Activated T-helper 1 cell treated with anti-CD3 and anti-CD28 coated beads, Interleukin-12 subunit alpha, Interleukin-12 subunit beta, Interleukin-2, Interleukin-4 antibody, amounts not matched to agents 30 ng/mL and 10 ng/mL and 1 ng/mL, durations not matched to agents 14 hours and 24 hours and 36 hours (primary cell): ENCODE measurements at regions of chr9 and their contacts with region 1.

Region 1: DNA sequence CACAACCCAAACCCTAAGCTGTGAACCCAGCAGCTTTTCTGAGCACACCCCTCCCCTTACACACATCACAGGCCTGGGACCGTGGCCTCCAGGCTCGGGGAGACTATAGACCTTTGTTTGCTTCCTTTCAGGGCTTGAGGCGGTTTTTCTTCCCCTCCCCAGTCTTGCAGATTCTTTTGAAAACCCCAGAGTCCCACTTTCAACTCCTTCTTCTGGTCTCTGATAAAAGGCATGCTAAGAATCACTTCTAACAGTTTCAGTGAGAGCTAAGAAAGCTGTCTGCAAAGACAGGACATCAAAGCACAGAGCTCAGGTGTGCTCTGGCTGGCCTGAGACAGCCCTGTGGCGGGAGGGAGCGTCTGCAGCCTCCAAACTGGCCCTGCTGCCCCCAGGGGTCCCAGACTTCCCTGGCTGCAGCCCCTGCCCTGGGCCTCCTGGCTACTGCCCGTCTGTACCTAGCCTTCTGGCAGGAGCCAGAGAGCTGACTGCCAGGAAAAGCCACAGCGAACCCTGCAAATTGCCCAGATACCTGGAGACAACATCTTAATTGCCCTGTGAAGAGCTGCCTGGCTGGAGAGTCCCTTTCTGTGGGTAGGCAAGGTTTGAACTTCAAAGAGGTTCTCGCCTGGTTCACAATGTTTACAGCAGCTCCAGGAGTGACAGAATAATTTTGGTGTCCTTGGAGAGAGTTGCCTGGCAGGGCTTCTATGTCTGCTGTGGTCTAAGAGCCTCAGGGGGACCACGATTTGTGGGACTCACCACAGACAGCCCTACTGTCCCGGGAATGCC is 139.0 kb downstream of the GADD45G start:
- DNase-seq: peak; percentile 75
- H3K4me3 Mint-ChIP-seq: peak overlapping the region; percentile 25
- H3K27ac Mint-ChIP-seq: peak overlapping the region; percentile 82
- H3K4me1 Mint-ChIP-seq: peaks cover 90% of the 10 kb centered on the region
- H3K27me3 Mint-ChIP-seq: no peaks in the 10 kb centered on the region

Region 2: GRCh38 chr9:89340332-89340731 is 403.4 kb before region 1 on chr9:
- intact Hi-C with region 1: loop called (anchors 10 kb)
- DNase-seq: no peak
- H3K4me3 Mint-ChIP-seq: no peak overlapping the region
- H3K27ac Mint-ChIP-seq: peak overlapping the region; percentile 60
- H3K4me1 Mint-ChIP-seq: peaks cover 35% of the 10 kb centered on the region
- H3K27me3 Mint-ChIP-seq: no peaks in the 10 kb centered on the region

Region 3: DNA sequence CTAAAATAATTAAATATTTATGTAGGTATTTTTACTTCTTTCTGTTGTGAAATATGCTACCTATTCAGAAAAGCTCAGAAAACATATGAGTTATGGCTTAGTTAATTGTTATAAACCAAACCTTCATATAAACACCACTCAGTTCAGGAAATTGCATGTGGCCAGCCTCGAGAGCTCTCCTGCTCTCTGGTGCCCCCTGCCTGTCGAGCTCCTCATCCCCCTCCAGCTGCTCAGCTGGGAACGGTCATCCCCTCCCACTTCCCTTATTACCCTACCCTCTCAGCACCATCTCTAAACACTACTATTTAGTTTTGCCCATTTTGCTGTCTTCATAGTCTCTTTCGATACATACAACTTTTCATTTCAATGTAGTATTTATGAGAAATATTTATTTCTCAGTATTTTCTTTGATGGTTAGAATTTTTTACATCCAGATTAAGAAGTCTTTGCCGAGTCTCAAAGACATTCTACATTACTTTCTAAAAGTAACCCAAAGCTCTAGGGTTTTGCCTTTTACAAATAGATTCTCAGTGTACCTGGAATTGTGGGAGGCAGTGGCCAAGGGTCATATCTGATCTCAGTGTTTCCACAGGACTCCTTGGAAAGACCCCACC is 194.6 kb before region 1 on chr9:
- intact Hi-C with region 1: no loop called
- DNase-seq: peak; percentile 73
- H3K4me3 Mint-ChIP-seq: no peak overlapping the region
- H3K27ac Mint-ChIP-seq: peak overlapping the region; percentile 29
- H3K4me1 Mint-ChIP-seq: peaks cover 30% of the 10 kb centered on the region
- H3K27me3 Mint-ChIP-seq: peaks cover 15% of the 10 kb centered on the region

Region 4: DNA sequence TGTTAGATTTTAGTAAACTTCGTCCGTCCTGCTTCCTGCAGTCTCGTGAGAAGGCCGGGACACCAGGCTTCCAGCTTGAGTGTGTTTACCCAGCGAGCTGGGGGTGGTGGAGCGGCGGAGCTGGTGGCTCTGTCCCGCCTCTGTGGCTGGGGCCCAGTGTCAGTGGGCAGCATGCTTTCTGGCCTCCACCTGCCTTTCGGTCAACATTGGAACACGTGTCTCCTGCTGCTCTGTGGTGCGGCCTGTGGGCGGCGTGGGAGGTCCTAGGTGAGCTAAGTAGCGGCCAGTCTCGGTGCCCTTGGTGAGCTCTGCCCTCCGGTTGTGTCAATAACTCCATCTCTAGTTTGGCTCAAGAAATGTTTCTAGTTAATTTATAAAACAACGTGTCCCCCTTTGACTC is 13.1 kb before region 1 on chr9:
- intact Hi-C with region 1: loop called (anchors 1 kb)
- DNase-seq: no peak
- H3K4me3 Mint-ChIP-seq: no peak overlapping the region
- H3K27ac Mint-ChIP-seq: no peak overlapping the region
- H3K4me1 Mint-ChIP-seq: peaks cover 20% of the 10 kb centered on the region
- H3K27me3 Mint-ChIP-seq: no peaks in the 10 kb centered on the region

Region 5: DNA sequence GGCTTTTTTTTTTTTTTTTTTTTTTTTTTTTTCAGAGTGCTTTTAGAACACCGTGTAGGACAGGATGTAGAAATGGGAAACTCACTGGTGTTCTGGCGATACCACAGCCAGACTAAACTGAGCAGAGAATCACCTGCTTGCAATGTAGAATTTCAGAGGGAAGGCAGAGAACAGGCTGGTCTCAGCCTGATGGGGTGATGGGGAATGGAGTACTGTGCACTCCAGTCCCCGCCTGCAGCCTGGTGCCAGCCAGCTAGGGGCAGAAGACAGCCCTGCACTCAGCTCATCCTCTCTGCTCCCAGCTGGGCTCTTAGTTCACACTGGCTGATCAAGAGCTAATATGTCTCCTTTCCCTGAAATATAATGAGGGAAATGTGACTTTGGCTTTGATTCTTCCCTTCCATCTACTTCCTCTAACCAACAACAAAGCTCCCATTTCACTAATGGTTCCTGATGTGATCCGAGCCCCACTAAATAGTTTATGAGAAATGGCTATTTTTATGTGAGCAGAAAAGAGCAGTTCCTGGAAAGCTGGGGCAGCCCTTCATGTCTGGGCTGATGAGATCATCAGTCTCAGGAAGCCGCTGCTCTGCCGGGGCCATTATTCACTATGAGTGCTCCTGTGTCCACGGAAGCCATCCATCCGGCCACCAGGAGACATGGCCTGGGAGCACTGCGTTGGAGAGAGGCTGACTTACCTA is 70.7 kb after region 1 on chr9:
- intact Hi-C with region 1: loop called (anchors 5 kb)
- DNase-seq: no peak
- H3K4me3 Mint-ChIP-seq: peak overlapping the region; percentile 10
- H3K27ac Mint-ChIP-seq: peak overlapping the region; percentile 36
- H3K4me1 Mint-ChIP-seq: peaks cover 41% of the 10 kb centered on the region
- H3K27me3 Mint-ChIP-seq: peaks cover 6% of the 10 kb centered on the region

Region 6: GRCh38 chr9:89825669-89826068 is 81.9 kb after region 1 on chr9:
- intact Hi-C with region 1: loop called (anchors 5 kb)
- DNase-seq: no peak
- H3K4me3 Mint-ChIP-seq: no peak overlapping the region
- H3K27ac Mint-ChIP-seq: no peak overlapping the region
- H3K4me1 Mint-ChIP-seq: peaks cover 43% of the 10 kb centered on the region
- H3K27me3 Mint-ChIP-seq: peaks cover 1% of the 10 kb centered on the region